ENCODE measurements at regions of chr1 and their contacts with region 1.

Region 1: DNA sequence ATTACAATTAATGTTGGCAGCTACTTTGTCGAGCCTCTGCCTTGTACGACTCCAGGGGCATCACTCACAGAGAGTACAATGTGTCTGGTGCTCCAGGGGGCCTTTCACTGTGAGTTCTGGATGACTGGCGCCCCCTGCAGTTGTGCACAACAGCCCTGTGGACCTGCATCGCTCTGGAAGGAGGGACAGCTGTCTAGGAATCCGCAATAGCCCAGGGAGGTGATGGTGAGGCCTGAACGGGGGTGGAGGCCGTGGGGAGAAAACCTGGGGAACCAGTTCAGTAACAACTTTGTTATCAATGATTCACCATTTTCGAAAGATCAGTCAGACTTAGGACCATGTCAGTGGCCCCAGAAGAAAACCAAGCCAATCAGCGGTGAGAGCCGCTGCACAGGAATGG is 189.1 kb downstream of the KAZN start:
- DNase-seq: no peak
- H3K4me3 Mint-ChIP-seq: no peak overlapping the region
- H3K27ac Mint-ChIP-seq: no peak overlapping the region
- H3K4me1 Mint-ChIP-seq: peaks cover 7% of the 10 kb centered on the region
- H3K27me3 Mint-ChIP-seq: no peaks in the 10 kb centered on the region
- CTCF ChIP-seq: no peak

Region 2: DNA sequence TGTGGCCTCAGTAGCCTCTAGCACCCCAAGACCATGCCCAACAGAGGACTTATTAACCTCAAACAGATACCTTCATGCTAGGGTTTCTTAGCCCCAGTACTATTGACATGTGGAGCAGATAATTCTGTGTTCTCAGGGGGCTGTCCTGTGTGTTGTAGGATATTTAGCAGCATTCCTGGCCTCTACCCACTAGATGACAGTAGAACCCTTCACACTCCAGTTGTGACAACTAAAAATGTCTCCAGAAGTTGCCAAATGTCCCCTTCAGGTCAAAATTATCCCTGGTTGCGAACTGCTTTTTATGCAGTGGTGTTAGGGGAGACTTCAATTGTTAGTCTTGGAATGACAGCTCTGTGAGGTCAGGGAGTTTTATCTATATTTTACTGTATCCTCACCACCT is 181.0 kb before region 1 on chr1:
- CTCF ChIA-PET with region 1: no interaction called
- POLR2A ChIA-PET with region 1: no interaction called
- intact Hi-C with region 1: loop called (anchors 5 kb)
- DNase-seq: peak; percentile 6
- H3K4me3 Mint-ChIP-seq: no peak overlapping the region
- H3K27ac Mint-ChIP-seq: no peak overlapping the region
- H3K4me1 Mint-ChIP-seq: no peaks in the 10 kb centered on the region
- H3K27me3 Mint-ChIP-seq: peaks cover 7% of the 10 kb centered on the region
- CTCF ChIP-seq: peak; percentile 37

Region 3: DNA sequence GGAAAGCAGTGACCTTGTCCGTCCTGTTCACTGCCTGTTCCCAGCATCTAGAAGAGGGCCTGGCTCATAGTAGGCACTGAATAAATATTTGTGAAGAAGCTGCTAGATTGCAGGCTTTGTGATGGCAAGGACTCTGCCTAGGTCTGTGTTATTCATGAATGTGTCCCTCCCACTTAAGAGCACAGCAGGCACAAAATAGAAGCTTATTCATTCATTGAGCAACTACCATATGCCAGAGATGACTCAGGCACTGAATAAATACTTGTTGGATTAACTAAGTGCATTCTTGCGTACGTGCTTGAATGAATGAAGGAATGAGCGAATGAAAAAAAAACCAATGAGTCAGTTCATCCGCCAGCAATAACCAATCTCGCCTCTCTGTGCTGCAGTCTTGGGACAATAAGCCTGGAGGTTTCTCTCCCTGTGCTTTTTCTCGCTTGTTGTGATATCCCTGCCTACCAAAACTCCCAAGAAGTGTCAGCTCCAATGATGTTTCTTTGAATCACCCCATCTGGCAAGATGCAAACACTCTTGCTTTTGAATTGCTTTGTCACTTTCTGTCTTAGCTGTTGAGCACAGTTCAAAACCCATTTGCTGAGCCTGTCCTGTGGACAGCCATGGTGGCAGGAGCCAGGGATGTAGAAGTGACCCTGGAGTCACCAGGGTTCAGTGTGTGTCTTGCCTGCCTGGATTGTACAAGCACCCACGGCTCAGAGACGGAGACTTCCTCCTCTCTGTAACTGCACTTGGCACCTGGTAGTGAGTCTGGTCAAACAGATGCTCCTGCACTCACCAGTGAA is 45.2 kb before region 1 on chr1:
- CTCF ChIA-PET with region 1: no interaction called
- POLR2A ChIA-PET with region 1: no interaction called
- intact Hi-C with region 1: loop called (anchors 5 kb)
- DNase-seq: peak; percentile 97
- H3K4me3 Mint-ChIP-seq: peak overlapping the region; percentile 0
- H3K27ac Mint-ChIP-seq: peak overlapping the region; percentile 82
- H3K4me1 Mint-ChIP-seq: peaks cover 33% of the 10 kb centered on the region
- H3K27me3 Mint-ChIP-seq: no peaks in the 10 kb centered on the region
- CTCF ChIP-seq: no peak

Region 4: DNA sequence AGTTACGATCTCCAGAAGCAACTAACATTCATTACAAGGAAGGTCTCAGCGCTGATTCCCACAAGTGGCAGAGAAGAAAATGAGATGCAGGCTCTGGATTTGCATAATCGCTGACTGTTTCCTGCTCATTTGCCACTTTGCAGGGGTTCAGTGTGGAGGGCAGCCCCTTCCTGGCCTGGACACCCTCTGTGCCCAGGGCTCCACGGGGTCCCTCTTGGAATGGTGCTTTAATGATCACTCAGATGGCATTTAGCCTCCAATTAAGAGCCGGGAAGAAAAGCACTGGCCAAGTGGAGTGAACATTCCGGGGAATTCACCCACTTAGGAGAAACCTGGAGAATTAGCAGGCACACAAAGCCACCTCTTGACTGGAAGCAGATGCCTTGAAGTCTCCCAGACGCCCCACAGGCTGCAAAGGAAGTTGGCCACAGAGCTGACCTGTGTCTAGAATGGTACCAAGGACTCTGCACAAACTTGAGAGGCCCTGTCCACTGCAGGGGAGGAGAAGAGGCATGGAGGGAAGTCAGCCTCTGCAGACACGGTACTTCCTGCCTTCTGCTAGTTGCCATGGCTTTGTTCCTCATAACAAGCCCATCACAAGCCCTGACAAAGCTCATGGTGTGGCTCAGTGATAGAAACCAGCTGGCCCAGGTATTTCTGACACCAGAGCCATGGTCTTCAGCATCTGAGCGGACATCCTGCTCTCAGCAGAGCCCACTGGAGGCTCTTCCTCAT is 31.9 kb before region 1 on chr1:
- CTCF ChIA-PET with region 1: no interaction called
- POLR2A ChIA-PET with region 1: no interaction called
- intact Hi-C with region 1: no loop called
- DNase-seq: no peak
- H3K4me3 Mint-ChIP-seq: no peak overlapping the region
- H3K27ac Mint-ChIP-seq: no peak overlapping the region
- H3K4me1 Mint-ChIP-seq: peaks cover 12% of the 10 kb centered on the region
- H3K27me3 Mint-ChIP-seq: no peaks in the 10 kb centered on the region
- CTCF ChIP-seq: no peak

Region 5: GRCh38 chr1:14923727-14924452 is 136.3 kb after region 1 on chr1:
- CTCF ChIA-PET with region 1: no interaction called
- POLR2A ChIA-PET with region 1: no interaction called
- intact Hi-C with region 1: no loop called
- DNase-seq: peak; percentile 42
- H3K4me3 Mint-ChIP-seq: peak overlapping the region; percentile 69
- H3K27ac Mint-ChIP-seq: no peak overlapping the region
- H3K4me1 Mint-ChIP-seq: peaks cover 12% of the 10 kb centered on the region
- H3K27me3 Mint-ChIP-seq: no peaks in the 10 kb centered on the region
- CTCF ChIP-seq: no peak

Region 6: DNA sequence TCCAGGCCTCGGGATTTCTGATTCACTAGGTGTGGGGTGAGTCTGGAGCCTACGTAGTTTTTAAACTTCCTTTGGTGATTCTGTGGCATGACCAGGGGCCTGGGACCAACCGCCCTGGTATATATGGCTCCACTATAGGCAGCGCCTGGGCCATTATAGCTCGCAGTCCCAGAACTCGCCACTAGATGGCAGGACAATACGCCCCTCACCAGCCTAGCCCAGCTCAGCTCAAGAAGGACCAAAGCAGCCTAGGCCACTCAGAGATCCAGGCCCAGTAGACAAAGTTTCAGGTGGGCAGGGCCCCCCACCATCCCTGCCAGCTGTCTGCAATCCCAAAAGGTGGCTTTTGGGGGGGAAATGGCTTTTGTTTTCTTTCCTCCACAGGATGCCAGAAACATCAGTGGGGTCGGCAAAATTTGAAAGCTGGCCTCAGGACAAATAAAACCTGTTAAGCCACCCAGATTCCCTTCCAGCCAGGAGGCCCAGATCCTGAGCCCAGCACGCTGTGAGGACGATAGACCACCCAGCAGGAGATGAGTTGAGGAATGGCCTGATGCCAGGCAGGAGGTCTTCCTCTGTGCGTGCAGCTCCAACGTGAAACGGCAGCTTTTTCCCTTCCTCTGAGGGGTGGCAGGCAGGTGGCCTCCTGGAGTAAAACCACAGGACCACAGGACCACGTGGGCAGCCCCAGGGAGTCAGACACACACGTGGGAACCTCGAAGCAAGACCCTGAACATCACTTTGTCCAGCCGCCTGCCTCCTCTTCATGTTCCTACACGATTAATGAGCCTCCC is 341.1 kb after region 1 on chr1:
- CTCF ChIA-PET with region 1: no interaction called
- POLR2A ChIA-PET with region 1: no interaction called
- intact Hi-C with region 1: no loop called
- DNase-seq: peak; percentile 74
- H3K4me3 Mint-ChIP-seq: no peak overlapping the region
- H3K27ac Mint-ChIP-seq: no peak overlapping the region
- H3K4me1 Mint-ChIP-seq: no peaks in the 10 kb centered on the region
- H3K27me3 Mint-ChIP-seq: peaks cover 1% of the 10 kb centered on the region
- CTCF ChIP-seq: peak; percentile 86